H1 (cell line): ENCODE measurements at regions of chr12 and their contacts with region 1.

Region 1: GRCh38 chr12:80709811-80710726 is 2.6 kb downstream of the MYF6 start:
- DNase-seq: peak in 1 of 2 experiments; percentile 65
- H3K4me3 ChIP-seq: peak overlapping the region; percentile 19 to 54 (median 32); a peak in 7 of 8 replicates
- H3K27ac ChIP-seq: no peak overlapping the region
- H3K4me1 ChIP-seq: peaks cover 11 to 27% (median 19%) of the 10 kb centered on the region in 4 experiments
- H3K27me3 ChIP-seq: peaks cover 32 to 61% (median 55%) of the 10 kb centered on the region in 4 experiments
- CTCF ChIP-seq: peak; percentile 66 to 91 (median 76)
- EP300 ChIP-seq: no peak
- POLR2A ChIP-seq: no peak
- RAD21 ChIP-seq: peak; percentile 60 to 73

Region 2: GRCh38 chr12:80469681-80470080 is 240.4 kb before region 1 on chr12:
- CTCF ChIA-PET with region 1: interaction called, 10 read pairs
- POLR2A ChIA-PET with region 1: no interaction called
- DNase-seq: no peak
- H3K4me3 ChIP-seq: no peak overlapping the region
- H3K27ac ChIP-seq: no peak overlapping the region
- H3K4me1 ChIP-seq: peaks cover 0 to 2% (median 0%) of the 10 kb centered on the region in 4 experiments; a peak in 2 of 7 replicates
- H3K27me3 ChIP-seq: no peaks in the 10 kb centered on the region
- CTCF ChIP-seq: no peak
- EP300 ChIP-seq: no peak
- POLR2A ChIP-seq: no peak
- RAD21 ChIP-seq: no peak

Region 3: DNA sequence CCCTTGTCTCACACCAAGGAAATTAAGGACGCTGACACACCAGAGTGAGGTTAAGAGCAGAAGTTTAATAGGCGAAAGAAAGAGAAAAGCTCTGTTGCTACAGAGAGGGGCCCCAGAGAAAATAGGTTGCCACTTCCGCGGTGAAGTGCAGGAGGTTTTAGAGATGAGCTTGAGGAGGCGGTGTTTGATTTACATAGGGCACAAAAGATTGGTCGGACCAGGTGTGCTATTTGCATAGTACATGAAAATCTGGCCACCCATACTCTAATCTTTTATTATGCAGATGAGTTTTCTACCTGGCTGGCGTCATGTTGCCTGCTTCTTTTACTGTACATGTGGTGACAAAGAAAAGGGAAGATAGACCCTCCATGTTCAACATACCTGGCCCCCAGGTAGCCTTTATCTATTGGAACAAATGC is 26.0 kb before region 1 on chr12:
- CTCF ChIA-PET with region 1: interaction called, 10 read pairs
- POLR2A ChIA-PET with region 1: interaction called, 6 read pairs
- DNase-seq: peak in 1 of 2 experiments; percentile 61
- H3K4me3 ChIP-seq: peak overlapping the region in 2 of 4 experiments; percentile 7 to 51; a peak in 5 of 8 replicates
- H3K27ac ChIP-seq: peak overlapping the region; percentile 60; the same call in 1 of the 2 replicates
- H3K4me1 ChIP-seq: peaks cover 0 to 9% (median 5%) of the 10 kb centered on the region in 4 experiments; a peak in 4 of 7 replicates
- H3K27me3 ChIP-seq: no peaks in the 10 kb centered on the region
- CTCF ChIP-seq: no peak
- EP300 ChIP-seq: peak in 1 of 2 experiments; percentile 92; a peak in 1 of 3 replicates
- POLR2A ChIP-seq: peak; percentile 59 to 75; a peak in 2 of 3 replicates
- RAD21 ChIP-seq: 0 out of 4 replicates have a peak, but pooled peaks of 1 of the 2 experiments have one; percentile 2